ENCODE measurements at regions of chrX and their contacts with region 1.

Region 1: DNA sequence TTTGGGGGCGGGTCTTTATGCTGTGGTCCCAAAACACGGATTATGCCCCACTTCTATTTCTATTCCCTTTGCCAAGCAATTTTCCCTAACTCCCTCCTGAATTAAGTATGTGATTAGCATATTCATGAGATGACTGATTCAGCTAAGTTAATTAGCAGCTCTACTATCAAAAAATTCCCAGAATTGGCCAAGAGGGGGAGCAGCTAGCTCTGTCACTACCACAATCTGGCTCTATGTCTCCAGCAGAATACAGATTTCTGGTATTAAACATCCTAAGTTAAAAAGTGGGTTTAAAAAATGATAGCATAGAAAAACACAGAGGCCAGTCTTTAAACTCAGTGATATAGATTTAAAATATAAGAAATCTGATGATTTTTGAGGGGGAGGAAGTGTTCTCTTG is 80.3 kb downstream of the GPC4 start:
- DNase-seq: peak; percentile 8
- H3K4me3 ChIP-seq: no peak overlapping the region
- H3K27ac ChIP-seq: no peak overlapping the region
- H3K4me1 ChIP-seq: no peaks in the 10 kb centered on the region
- H3K27me3 ChIP-seq: no peaks in the 10 kb centered on the region
- CTCF ChIP-seq: peak in 2 of 4 experiments; percentile 42 to 48
- POLR2A ChIP-seq: no peak

Region 2: DNA sequence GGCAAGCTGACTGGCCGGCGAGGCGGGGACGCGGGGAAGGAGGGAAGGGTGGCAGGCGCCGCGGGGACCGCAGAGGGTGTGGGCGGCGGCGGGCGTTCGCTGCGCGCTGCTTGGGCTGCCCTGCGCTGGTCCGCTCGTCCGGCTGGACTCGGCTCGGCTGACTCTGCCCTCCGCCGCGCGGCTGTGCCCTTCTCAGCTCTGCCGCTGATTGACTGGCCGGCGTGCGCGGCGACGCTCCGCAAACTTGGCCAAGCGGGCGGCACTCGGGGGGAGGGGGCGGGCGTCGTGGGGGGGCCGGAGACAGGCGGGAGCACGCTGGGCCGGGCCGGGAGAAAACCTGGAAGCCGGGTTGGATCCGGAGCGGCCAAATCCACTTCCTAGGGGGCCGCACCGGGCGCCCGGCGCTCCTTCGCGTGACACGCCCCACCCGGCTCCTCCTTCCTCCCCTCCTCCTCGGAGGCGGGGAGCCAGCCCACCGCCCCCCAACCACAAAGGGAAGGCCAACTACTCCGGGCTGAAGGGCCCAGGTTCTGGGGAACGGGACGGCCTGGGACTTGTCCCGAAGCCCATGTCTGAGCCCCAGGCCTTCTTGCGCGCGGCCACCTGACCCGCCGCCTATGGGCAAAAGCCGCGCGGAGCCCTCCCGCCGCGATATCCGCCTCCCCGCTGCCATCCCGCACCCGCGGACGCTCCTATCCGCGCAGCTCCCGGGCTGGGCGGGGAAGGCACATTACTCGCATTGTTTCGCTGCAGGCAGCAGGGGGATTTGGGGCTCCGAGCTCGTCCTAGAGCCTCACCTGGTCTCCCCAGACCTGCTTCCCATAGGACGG is 80.5 kb after region 1 on chrX and contains the start of gene GPC4:
- intact Hi-C with region 1: loop called (anchors 5 kb)
- DNase-seq: peak; percentile 56
- H3K4me3 ChIP-seq: peak within 1 kb of the TSS; percentile 40 to 45
- H3K27ac ChIP-seq: peak within 1 kb of the TSS; percentile 50 to 54
- H3K4me1 ChIP-seq: no peaks in the 10 kb centered on the region
- H3K27me3 ChIP-seq: no peaks in the 10 kb centered on the region
- CTCF ChIP-seq: no peak
- POLR2A ChIP-seq: no peak
- total RNA-seq, gene GPC4: 8.0 to 15.2 TPM

Region 3: DNA sequence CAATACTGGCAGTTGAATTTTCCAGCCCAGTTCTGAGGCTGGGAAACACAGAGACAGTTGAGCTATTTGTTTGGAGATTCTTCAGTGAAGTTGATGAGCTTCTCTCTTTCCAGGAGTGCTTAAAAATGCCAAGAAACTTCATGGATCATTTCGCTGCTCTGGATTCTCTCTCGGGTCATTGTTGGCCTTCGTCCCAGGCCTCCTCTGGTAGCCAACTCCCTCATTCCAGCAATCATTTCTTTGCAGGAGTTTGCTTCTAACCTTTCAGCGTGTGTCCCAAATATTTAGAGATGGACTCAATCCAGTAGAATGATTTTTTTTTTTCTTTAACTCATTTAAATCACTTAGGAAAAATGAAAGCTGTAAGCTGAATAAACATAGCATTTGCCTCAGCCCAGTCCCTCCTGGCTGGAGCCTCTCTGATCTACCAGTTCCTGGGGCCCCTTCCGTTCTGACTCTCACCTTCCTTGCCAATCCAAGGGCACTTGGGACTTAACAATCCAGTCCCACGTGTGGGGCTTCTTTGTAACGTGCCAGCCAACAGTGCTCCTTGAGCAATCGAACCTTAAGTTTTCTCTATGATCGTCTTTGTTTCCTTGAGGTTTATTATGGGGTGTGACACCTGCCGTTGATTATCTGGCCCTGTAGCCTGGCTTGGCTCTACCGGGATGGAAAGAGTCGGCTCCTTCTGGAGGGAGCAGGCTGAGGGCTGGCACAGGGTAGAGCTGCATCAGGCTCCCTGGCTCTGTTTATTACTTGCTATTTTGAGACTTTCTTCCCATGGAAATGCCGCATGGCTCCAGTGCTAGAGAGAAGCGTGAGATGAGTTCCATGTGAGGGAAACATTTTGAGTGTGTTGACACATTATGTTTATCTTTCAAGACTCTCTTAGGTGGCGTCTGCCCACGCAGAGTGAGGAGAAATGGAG is 160.7 kb after region 1 on chrX:
- intact Hi-C with region 1: loop called (anchors 10 kb)
- DNase-seq: peak; percentile 4
- H3K4me3 ChIP-seq: no peak overlapping the region
- H3K27ac ChIP-seq: no peak overlapping the region
- H3K4me1 ChIP-seq: no peaks in the 10 kb centered on the region
- H3K27me3 ChIP-seq: no peaks in the 10 kb centered on the region
- CTCF ChIP-seq: no peak
- POLR2A ChIP-seq: no peak

Measured in prostate gland (tissue), 2 donors.